ENCODE measurements at regions of chr1 and their contacts with region 1.

Region 1: DNA sequence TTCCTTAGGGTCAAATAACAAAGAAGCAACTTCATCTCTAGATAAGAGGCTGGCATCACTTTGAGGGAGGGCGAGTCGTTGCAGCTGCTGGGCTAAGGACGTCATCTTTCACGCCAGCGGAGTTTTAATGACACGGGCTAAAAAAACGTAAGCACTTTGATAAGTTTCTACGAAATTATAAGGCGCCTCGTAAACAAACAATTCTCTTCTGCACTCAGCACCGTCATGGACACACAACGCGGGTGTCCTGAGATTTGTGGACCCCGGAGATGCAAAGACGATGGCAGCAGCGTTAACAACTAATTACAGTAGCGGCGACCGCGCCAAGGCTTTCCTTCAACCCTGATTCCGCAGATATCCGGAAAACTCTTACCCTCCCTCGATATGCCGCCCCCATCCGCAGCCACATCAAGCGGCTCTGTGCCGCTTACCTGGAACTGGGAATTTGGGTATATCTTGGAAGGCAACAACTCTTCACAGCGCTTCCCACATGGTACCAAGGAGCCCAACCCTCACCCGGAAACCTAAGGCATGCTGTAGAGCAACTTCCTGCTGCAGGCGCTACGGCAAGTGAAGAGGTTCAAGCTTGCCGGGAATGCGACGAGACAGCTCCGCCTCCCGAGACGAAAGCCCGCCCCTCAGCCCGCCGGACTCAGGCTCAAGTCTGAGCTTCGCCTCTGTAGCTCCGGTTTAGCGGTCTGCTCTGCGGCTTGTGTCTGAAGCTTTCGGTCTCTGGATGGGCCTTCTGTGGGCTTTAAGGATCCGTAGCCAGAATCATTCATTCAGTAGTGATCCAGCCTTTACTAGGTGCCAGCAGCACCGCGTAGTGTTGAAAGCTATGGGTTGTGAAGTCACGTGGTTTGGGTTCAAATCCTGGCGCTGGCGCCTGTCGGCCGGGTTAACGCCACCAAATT is at the start of gene HEATR1:
- DNase-seq: peak; percentile 88
- ATAC-seq: peak; percentile 97
- H3K4me3 ChIP-seq: peak within 1 kb of the TSS; percentile 94
- H3K27ac ChIP-seq: peak within 1 kb of the TSS; percentile 37
- H3K4me1 ChIP-seq: peaks cover 5% of the 10 kb centered on the region
- H3K27me3 ChIP-seq: peaks cover 6% of the 10 kb centered on the region
- CTCF ChIP-seq: no peak
- total RNA-seq, gene HEATR1: 27.6 TPM in 2 replicates

Region 2: DNA sequence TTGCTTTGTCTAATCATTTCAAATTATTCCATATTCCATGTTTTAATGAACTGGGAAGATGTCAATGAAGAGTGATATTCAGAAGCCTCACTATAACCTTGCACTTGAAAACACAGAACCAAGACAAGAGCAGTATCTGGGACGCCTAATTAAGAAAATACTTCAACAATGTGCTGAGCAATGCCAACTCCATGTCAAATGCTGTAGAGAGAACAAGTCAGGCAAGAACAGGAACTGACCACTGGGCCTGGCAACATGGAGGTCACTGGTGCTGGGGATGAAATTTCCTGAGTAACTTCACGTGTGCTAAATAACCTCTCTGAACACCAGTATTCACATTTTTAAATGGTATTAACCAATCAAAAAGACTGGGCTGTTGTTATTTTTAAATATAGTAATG is 22.7 kb before region 1 on chr1:
- CTCF ChIA-PET with region 1: no interaction called
- POLR2A ChIA-PET with region 1: no interaction called
- intact Hi-C with region 1: loop called (anchors 2 kb)
- DNase-seq: no peak
- ATAC-seq: no peak
- H3K4me3 ChIP-seq: no peak overlapping the region
- H3K27ac ChIP-seq: no peak overlapping the region
- H3K4me1 ChIP-seq: no peaks in the 10 kb centered on the region
- H3K27me3 ChIP-seq: no peaks in the 10 kb centered on the region
- CTCF ChIP-seq: no peak

Region 3: DNA sequence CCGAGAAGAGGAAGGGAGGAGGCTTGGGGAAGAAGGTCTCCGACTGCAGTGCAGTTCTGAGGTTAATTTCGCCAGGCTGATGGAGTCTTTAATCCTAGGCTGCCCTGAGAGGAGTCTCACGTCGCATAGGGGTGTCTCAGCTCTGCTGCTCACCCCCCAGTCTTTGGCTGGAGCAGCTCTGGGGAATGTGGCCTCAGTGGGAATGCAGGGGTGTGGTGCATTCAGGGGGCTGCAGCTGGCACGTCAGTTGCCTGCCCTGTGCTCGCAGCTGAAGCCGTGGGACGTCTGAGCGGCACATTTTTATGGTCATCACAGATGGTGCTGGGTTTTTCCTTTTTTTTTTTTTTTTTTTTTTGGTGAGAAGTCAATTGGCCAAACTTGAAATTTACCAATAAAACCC is 120.3 kb after region 1 on chr1:
- CTCF ChIA-PET with region 1: no interaction called
- POLR2A ChIA-PET with region 1: no interaction called
- intact Hi-C with region 1: no loop called
- DNase-seq: no peak
- ATAC-seq: no peak
- H3K4me3 ChIP-seq: no peak overlapping the region
- H3K27ac ChIP-seq: no peak overlapping the region
- H3K4me1 ChIP-seq: no peaks in the 10 kb centered on the region
- H3K27me3 ChIP-seq: peaks cover 70% of the 10 kb centered on the region
- CTCF ChIP-seq: no peak

Region 4: DNA sequence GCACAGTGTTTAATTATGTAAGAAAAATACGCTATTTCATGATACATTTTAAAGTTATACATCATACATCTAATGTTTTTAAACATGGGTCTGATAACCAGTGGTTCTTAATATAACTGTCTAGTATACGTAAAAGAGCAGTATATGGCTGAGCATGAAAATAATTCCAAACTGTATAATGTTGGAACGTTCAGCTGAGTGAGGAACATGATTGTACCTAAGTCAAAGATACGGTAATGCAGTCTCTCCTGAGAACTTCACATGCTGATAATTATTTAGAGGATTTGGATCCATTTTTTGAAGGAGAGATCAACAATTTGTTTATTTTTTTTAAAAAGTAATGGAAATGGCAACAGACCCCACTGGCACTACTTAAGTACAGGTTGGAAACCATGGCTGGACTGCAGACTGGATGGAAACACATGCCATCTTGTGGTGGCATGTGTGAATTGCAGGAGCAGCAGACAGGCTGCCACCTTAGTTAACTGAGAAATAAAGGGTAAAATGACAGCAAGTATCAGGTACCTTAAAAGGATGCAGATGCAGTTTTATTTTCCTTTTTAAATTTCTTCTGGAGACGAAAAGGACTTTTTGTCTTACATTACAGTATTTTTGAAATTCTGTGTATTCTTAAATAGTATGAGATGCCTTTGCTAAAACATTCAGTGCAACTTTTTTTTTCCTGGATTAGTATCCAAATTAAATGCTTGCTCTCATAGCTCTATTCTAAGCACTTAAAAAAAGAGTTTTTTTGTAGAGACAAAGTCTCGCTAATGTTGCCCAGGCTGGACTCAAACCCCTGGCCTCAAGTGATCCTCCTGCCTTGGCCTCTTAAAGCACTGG is 264.6 kb after region 1 on chr1:
- CTCF ChIA-PET with region 1: no interaction called
- POLR2A ChIA-PET with region 1: no interaction called
- intact Hi-C with region 1: loop called (anchors 2 kb)
- DNase-seq: peak; percentile 54
- ATAC-seq: peak; percentile 74
- H3K4me3 ChIP-seq: no peak overlapping the region
- H3K27ac ChIP-seq: no peak overlapping the region
- H3K4me1 ChIP-seq: no peaks in the 10 kb centered on the region
- H3K27me3 ChIP-seq: no peaks in the 10 kb centered on the region
- CTCF ChIP-seq: peak; percentile 85

Region 5: DNA sequence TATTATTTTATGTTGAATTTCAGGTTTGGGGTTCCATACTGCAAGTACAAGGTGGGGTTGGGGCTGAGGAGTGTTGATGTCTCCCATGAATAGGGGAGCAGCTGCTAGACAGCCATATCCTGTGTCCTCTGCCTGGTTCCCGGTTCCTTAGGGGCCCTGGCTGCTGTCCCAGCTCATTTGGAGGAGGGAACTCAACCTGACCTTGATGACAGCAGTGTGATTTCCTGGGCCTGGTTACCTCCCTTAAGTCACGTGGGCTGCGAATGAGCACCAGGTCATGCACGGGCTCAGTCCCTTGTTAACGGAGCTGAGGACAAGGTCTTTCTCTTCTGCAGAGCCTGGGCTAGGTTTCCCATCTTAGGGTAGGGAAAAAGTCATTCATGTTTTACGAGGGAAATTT is 276.0 kb after region 1 on chr1:
- CTCF ChIA-PET with region 1: no interaction called
- POLR2A ChIA-PET with region 1: no interaction called
- intact Hi-C with region 1: no loop called
- DNase-seq: no peak
- ATAC-seq: no peak
- H3K4me3 ChIP-seq: no peak overlapping the region
- H3K27ac ChIP-seq: no peak overlapping the region
- H3K4me1 ChIP-seq: no peaks in the 10 kb centered on the region
- H3K27me3 ChIP-seq: no peaks in the 10 kb centered on the region
- CTCF ChIP-seq: no peak

Region 6: DNA sequence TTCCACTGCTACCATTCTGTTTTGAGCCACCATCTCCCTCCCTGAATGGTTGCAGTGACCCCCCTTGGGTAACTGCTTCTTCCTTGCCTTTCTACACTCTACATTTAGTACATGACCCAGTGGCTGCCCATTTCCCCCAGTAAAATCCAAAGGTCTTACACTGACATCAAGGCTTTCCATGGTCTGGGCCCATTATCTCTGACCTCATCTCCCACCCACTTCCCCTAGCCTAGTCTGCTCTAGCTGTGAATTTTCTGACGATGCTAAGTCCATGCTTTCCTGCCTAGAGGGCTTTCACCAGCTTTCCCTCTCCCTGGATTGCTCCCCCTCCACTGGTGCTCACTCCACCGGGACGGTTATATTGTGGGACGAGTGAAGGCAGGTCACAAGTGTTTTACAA is 657.0 kb after region 1 on chr1:
- CTCF ChIA-PET with region 1: no interaction called
- POLR2A ChIA-PET with region 1: no interaction called
- intact Hi-C with region 1: no loop called
- DNase-seq: no peak
- ATAC-seq: no peak
- H3K4me3 ChIP-seq: no peak overlapping the region
- H3K27ac ChIP-seq: no peak overlapping the region
- H3K4me1 ChIP-seq: no peaks in the 10 kb centered on the region
- H3K27me3 ChIP-seq: no peaks in the 10 kb centered on the region
- CTCF ChIP-seq: no peak

Region 7: DNA sequence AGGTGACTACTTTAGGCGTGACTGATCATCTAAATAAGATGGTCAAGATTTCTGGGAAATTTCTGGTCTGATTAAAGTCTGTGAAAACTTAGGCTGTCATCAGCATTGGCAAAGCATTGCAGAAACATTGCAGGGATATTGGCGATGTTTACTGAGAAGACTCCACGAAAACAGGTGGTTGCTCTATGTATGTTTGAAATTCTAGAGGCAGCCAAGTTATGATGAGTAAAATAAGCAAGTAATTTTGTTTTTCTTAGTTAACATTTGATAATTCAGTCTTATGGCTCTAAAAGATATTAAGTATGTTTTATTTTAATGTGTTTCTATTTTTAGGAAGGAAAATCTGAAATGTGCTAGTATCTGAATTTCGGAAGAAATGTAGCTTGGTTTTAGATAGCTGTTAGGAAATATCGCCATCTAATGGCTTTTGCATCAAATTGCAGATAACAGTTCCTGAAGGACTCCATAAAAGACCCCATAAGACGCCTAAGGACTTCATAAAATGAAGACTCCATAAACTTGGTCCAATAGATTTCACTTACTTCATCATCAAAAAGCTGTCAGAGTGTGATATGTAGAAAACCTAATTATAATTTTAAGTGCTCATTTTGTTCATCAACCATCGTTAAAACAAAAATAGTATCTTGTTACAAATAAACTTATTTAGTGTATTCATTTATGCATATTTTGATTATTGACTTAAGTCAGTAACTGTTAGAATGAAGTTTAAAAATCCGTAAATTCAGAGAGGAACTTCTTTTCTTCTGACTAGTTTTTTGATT is 782.3 kb after region 1 on chr1:
- CTCF ChIA-PET with region 1: interaction called, 6 read pairs
- POLR2A ChIA-PET with region 1: no interaction called
- intact Hi-C with region 1: loop called (anchors 1 kb)
- DNase-seq: peak; percentile 25
- ATAC-seq: no peak
- H3K4me3 ChIP-seq: no peak overlapping the region
- H3K27ac ChIP-seq: no peak overlapping the region
- H3K4me1 ChIP-seq: no peaks in the 10 kb centered on the region
- H3K27me3 ChIP-seq: peaks cover 17% of the 10 kb centered on the region
- CTCF ChIP-seq: peak; percentile 66

Region 8: GRCh38 chr1:237562242-237562823 is 958.1 kb after region 1 on chr1:
- CTCF ChIA-PET with region 1: interaction called, 12 read pairs
- POLR2A ChIA-PET with region 1: no interaction called
- intact Hi-C with region 1: no loop called
- DNase-seq: peak; percentile 84
- ATAC-seq: peak; percentile 80
- H3K4me3 ChIP-seq: no peak overlapping the region
- H3K27ac ChIP-seq: no peak overlapping the region
- H3K4me1 ChIP-seq: no peaks in the 10 kb centered on the region
- H3K27me3 ChIP-seq: peaks cover 23% of the 10 kb centered on the region; the same call in 1 of the 2 replicates
- CTCF ChIP-seq: peak; percentile 64